PC-9 (cell line): ENCODE measurements at regions of chr12 and their contacts with region 1.

Region 1: DNA sequence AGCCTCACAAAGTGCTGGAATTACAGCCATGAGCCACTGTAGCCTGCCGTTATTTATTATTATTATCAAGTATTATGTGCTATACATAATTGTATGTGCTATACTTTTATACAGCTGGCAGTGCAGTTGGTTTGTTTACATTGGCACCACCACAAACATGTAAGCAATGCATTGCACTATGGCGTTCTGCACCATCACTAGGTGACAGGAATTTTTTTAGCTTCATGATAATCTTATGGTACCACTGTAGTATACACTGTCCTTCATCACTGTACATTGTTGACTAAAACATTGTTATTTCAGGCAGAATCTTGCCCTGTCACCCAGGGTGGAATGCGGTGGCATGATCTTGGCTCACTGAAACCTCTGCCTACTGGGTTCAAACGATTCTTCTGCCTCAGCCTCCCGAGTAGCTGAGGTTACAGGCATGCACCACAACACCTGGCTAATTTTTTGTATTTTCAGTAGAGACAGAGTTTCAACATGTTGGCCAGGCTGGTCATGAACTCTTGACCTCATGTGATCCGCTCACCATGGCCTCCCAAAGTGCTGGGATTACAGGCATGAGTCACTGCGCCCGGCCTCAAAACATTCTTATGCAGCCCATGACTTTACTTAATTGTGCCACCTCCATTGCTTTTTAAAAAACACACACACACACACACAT is 17.1 kb downstream of the MRPL42 start:
- DNase-seq: peak in 1 of 2 experiments; percentile 5
- H3K4me3 ChIP-seq: no peak overlapping the region
- H3K27ac ChIP-seq: no peak overlapping the region
- H3K4me1 ChIP-seq: no peaks in the 10 kb centered on the region
- H3K27me3 ChIP-seq: no peaks in the 10 kb centered on the region
- CTCF ChIP-seq: no peak

Region 2: GRCh38 chr12:93387780-93388179 is 96.7 kb before region 1 on chr12:
- CTCF ChIA-PET with region 1: no interaction called
- POLR2A ChIA-PET with region 1: no interaction called
- intact Hi-C with region 1: no loop called
- DNase-seq: no peak
- H3K4me3 ChIP-seq: no peak overlapping the region
- H3K27ac ChIP-seq: no peak overlapping the region
- H3K4me1 ChIP-seq: peaks cover 8% of the 10 kb centered on the region; the same call in 1 of the 2 replicates
- H3K27me3 ChIP-seq: no peaks in the 10 kb centered on the region
- CTCF ChIP-seq: no peak

Region 3: GRCh38 chr12:93599192-93599591 is 114.7 kb after region 1 on chr12:
- CTCF ChIA-PET with region 1: no interaction called
- POLR2A ChIA-PET with region 1: interaction called, 19 read pairs
- intact Hi-C with region 1: no loop called
- DNase-seq: no peak
- H3K4me3 ChIP-seq: no peak overlapping the region
- H3K27ac ChIP-seq: no peak overlapping the region
- H3K4me1 ChIP-seq: no peaks in the 10 kb centered on the region
- H3K27me3 ChIP-seq: no peaks in the 10 kb centered on the region
- CTCF ChIP-seq: no peak

Region 4: GRCh38 chr12:94020335-94020734 is 535.9 kb after region 1 on chr12:
- CTCF ChIA-PET with region 1: no interaction called
- POLR2A ChIA-PET with region 1: no interaction called
- intact Hi-C with region 1: no loop called
- DNase-seq: no peak
- H3K4me3 ChIP-seq: no peak overlapping the region
- H3K27ac ChIP-seq: no peak overlapping the region
- H3K4me1 ChIP-seq: no peaks in the 10 kb centered on the region
- H3K27me3 ChIP-seq: no peaks in the 10 kb centered on the region
- CTCF ChIP-seq: no peak